Mammary epithelial cell (primary cell): ENCODE measurements at regions of chr7 and their contacts with region 1.

Region 1: GRCh38 chr7:98902523-98902922 is 24.2 kb downstream of the TRRAP start:
- DNase-seq: no peak
- H3K4me3 ChIP-seq: no peak overlapping the region
- H3K27ac ChIP-seq: no peak overlapping the region
- H3K4me1 ChIP-seq: no peaks in the 10 kb centered on the region
- H3K27me3 ChIP-seq: no peaks in the 10 kb centered on the region
- CTCF ChIP-seq: no peak

Region 2: DNA sequence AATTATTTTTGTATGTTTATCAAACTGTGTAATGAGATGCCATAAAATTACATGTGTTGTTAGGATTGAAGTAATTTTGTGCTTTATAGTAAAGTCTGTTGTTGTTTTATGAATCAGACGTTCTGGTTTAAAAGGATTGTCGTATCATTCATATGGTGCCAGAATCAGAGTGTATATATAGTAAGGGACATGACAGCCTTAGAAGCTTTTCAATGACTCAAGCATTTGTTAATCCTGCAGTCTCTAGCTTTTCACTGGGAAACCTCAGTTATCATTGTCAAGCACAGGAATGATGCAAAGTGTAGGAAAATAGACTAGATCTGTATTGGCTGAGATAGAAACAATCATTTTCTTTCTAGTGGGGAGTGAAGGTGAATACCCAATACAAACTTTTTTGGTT is 33.3 kb after region 1 on chr7:
- CTCF ChIA-PET with region 1: no interaction called
- dilution Hi-C with region 1: loop called (anchors 5 kb)
- in situ Hi-C with region 1: no loop called
- intact Hi-C with region 1: no loop called
- DNase-seq: no peak
- H3K4me3 ChIP-seq: no peak overlapping the region
- H3K27ac ChIP-seq: no peak overlapping the region
- H3K4me1 ChIP-seq: no peaks in the 10 kb centered on the region
- H3K27me3 ChIP-seq: no peaks in the 10 kb centered on the region
- CTCF ChIP-seq: no peak

Region 3: DNA sequence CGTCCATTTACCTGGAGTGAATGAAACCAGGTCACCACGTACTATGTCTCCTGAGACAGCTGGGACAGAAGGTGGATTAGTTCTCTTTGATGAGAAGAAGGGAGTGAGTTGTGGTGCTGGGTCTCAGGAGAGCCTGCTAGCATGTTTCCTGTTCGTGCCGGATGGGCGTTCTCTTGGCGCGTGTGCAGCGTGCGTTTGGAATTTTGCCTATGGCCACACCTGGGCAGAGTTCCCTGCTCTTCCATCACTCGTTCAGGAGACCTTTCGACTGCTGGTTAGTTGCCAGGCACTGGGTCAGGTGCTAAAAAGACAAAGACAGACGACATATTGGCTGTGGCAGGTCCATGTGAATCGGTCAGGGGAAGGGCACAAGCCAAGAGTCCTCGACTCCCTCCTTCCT is 66.1 kb after region 1 on chr7:
- CTCF ChIA-PET with region 1: no interaction called
- dilution Hi-C with region 1: loop called (anchors 5 kb)
- in situ Hi-C with region 1: no loop called
- intact Hi-C with region 1: no loop called
- DNase-seq: no peak
- H3K4me3 ChIP-seq: no peak overlapping the region
- H3K27ac ChIP-seq: no peak overlapping the region
- H3K4me1 ChIP-seq: no peaks in the 10 kb centered on the region
- H3K27me3 ChIP-seq: no peaks in the 10 kb centered on the region
- CTCF ChIP-seq: no peak